Dendritic cell treated with granulocyte-macrophage colony-stimulating factor and Interleukin-4, amounts not matched to agents 40 ng/mL and 50 ng/mL, for 4 days (primary cell): ENCODE measurements at regions of chrX and their contacts with region 1.

Region 1: GRCh38 chrX:47650164-47651042 is at the start of gene ELK1:
- H3K4me3 Mint-ChIP-seq: peak within 1 kb of the TSS; percentile 81
- H3K27ac Mint-ChIP-seq: peak within 1 kb of the TSS; percentile 89
- H3K4me1 Mint-ChIP-seq: peaks cover 57% of the 10 kb centered on the region
- H3K27me3 Mint-ChIP-seq: no peaks in the 10 kb centered on the region

Region 2: DNA sequence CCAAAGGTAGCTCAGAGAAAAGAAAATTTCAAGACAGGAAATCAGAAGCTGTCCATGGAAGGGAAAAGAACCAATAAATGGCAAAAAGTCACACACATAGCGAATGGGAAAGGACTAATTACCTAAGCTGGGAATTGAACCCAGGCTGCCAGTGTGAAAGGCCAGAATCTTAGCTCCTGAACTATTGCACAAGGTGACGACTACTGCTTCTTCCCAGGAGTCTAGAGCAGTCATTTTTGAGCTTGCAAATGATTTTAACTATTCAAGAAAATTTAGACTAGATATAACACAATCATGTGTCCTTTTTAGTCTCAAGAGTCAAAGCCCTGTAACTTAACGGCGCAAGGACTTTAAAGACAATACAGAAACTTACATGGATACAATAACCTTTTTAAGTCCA is 152.2 kb after region 1 on chrX:
- intact Hi-C with region 1: no loop called
- H3K4me3 Mint-ChIP-seq: no peak overlapping the region
- H3K27ac Mint-ChIP-seq: no peak overlapping the region
- H3K4me1 Mint-ChIP-seq: peaks cover 9% of the 10 kb centered on the region
- H3K27me3 Mint-ChIP-seq: no peaks in the 10 kb centered on the region

Region 3: GRCh38 chrX:47836164-47837072 is 186.0 kb after region 1 on chrX and contains the start of gene ZNF81:
- intact Hi-C with region 1: loop called (anchors 5 kb)
- H3K4me3 Mint-ChIP-seq: peak within 1 kb of the TSS; percentile 100
- H3K27ac Mint-ChIP-seq: peak within 1 kb of the TSS; percentile 92
- H3K4me1 Mint-ChIP-seq: no peaks in the 10 kb centered on the region
- H3K27me3 Mint-ChIP-seq: no peaks in the 10 kb centered on the region